ENCODE measurements at regions of chr1 and their contacts with region 1.

Region 1: GRCh38 chr1:211680752-211681327 is 5.4 kb upstream of the NEK2 start:
- DNase-seq: peak; percentile 80
- ATAC-seq: peak; percentile 84
- H3K4me3 ChIP-seq: no peak overlapping the region
- H3K27ac ChIP-seq: peak overlapping the region; percentile 38
- H3K4me1 ChIP-seq: peaks cover 16% of the 10 kb centered on the region
- H3K27me3 ChIP-seq: no peaks in the 10 kb centered on the region
- CTCF ChIP-seq: peak; percentile 66 to 87 (median 81); a peak in 5 of 6 replicates
- EP300 ChIP-seq: 0 out of 4 replicates have a peak, but pooled peaks of 1 of the 2 experiments have one; percentile 20
- POLR2A ChIP-seq: no peak
- RAD21 ChIP-seq: peak; percentile 88

Region 2: DNA sequence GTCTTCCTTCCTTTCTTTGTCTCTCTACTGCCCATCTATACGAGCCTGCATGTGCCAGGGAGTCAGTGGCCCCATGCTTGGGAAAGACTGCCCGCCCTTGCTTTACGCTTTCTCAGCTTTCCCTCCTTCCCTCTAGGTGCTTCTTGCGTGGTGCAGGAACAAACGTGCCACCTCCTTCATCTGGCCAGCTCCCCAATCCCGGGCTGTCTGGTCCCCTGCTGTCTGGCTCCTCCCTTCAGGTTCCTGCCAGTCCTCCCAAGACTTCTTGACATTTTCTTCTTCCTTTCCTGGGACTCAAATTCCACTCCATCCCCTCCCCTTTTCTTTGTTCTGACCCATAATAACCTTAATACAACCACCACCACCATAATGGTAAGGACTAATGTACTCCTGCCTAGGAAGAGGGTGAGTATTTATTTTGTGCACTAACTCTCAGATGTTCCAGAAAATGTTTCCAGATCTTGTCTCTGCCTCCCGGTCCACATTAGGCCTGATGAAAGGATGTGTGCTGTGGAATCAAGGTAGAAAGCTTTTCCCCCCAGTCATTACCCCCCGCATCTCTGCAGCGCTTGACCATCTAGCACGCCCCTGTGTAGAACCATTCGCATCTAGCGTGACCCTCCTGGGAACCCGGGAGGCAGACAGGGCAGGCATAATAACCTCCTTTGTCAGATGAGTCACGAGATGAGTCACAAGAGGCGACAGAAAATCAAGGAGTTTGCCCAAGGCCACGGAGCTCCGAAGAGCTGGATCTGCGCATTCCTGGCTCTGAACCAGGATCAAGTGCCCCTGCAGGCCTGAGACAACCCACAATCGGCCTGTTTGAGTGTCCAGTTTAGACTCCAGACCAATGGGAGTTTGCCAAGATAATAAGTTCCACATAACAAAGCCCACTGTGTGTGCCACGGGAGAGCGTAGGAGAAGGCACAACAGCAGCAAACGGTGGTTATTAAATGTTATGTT is 54.6 kb after region 1 on chr1:
- CTCF ChIA-PET with region 1: interaction called, 5 read pairs
- POLR2A ChIA-PET with region 1: no interaction called
- RAD21 ChIA-PET with region 1: interaction called, 14 read pairs
- SMC1A ChIA-PET with region 1: interaction called, 11 read pairs
- in situ Hi-C with region 1: no loop called
- intact Hi-C with region 1: no loop called
- DNase-seq: no peak
- ATAC-seq: no peak
- H3K4me3 ChIP-seq: no peak overlapping the region
- H3K27ac ChIP-seq: no peak overlapping the region
- H3K4me1 ChIP-seq: peaks cover 30% of the 10 kb centered on the region
- H3K27me3 ChIP-seq: no peaks in the 10 kb centered on the region
- CTCF ChIP-seq: no peak
- EP300 ChIP-seq: no peak
- POLR2A ChIP-seq: no peak
- RAD21 ChIP-seq: no peak

Region 3: GRCh38 chr1:211935448-211935970 is 254.7 kb after region 1 on chr1:
- CTCF ChIA-PET with region 1: interaction called, 7 read pairs
- POLR2A ChIA-PET with region 1: interaction called, 4 read pairs
- RAD21 ChIA-PET with region 1: interaction called, 13 read pairs
- SMC1A ChIA-PET with region 1: interaction called, 6 read pairs
- in situ Hi-C with region 1: no loop called
- intact Hi-C with region 1: loop called (anchors 5 kb)
- DNase-seq: peak; percentile 97
- ATAC-seq: peak; percentile 84
- H3K4me3 ChIP-seq: peak overlapping the region; percentile 24; the same call in 1 of the 2 replicates
- H3K27ac ChIP-seq: peak overlapping the region; percentile 68
- H3K4me1 ChIP-seq: peaks cover 62% of the 10 kb centered on the region
- H3K27me3 ChIP-seq: no peaks in the 10 kb centered on the region
- CTCF ChIP-seq: no peak
- EP300 ChIP-seq: peak; percentile 87 to 94
- POLR2A ChIP-seq: no peak
- RAD21 ChIP-seq: 0 out of 2 replicates have a peak, but pooled peaks have one; percentile 4

Region 4: DNA sequence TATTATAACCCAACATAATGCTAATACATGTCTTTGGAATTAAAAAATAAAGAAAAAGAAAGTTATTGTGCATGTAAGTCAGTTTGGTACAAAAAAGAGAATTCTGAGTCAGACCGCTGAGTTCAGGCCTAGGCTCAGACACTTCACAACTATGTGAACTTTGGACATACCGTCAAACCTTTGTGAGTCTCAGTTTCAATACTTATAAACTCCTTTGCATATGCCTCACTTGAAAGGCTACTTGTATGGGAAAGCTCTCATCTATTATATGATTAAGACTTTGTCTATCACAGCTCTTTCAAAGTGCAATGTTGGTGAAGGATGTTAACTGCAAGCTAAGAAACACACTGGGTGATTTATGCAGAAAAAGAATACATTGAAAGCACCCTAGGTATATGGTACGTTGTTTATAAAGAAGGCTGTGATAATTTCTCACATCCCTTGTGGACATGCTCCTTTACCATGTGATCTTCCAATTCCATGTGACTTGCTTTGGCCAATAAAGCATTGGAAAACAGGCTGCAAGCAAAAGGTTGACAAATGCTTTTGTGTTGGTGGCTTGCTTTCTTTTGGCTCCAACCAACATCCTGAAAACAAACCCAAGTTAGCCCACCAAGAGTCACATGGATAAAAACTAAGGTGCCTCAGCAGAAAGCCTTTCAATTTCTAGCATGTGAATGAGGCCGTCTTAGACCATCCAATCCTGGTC is 304.9 kb after region 1 on chr1:
- CTCF ChIA-PET with region 1: interaction called, 11 read pairs
- POLR2A ChIA-PET with region 1: interaction called, 3 read pairs
- RAD21 ChIA-PET with region 1: interaction called, 9 read pairs
- SMC1A ChIA-PET with region 1: interaction called, 10 read pairs
- in situ Hi-C with region 1: no loop called
- intact Hi-C with region 1: no loop called
- DNase-seq: peak; percentile 82
- ATAC-seq: peak; percentile 99
- H3K4me3 ChIP-seq: no peak overlapping the region
- H3K27ac ChIP-seq: peak overlapping the region; percentile 88
- H3K4me1 ChIP-seq: peaks cover 16% of the 10 kb centered on the region
- H3K27me3 ChIP-seq: no peaks in the 10 kb centered on the region
- CTCF ChIP-seq: no peak
- EP300 ChIP-seq: peak in 1 of 2 experiments; percentile 52; a peak in 1 of 4 replicates
- POLR2A ChIP-seq: no peak; the same call in 1 of the 2 replicates
- RAD21 ChIP-seq: no peak

Region 5: DNA sequence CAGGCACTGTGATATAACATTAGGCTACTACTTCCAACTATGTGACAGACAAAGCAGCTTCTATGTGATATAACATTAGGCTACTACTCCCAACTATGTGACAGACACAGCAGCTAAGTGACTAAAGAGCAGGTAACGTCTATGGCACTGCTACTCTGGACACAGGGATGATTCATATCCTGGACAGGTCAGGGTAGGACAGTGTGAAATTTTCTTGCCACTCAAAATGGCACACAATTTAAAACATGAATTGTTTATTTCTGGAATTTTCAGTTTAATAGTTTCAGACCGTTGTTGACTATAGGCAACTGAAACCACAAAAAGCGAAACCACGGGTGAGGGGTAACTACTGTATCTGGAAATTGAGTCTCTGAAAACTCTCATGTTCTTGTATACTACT is 359.8 kb after region 1 on chr1:
- CTCF ChIA-PET with region 1: interaction called, 181 read pairs
- POLR2A ChIA-PET with region 1: interaction called, 26 read pairs
- RAD21 ChIA-PET with region 1: interaction called, 107 read pairs
- SMC1A ChIA-PET with region 1: interaction called, 135 read pairs
- in situ Hi-C with region 1: no loop called
- intact Hi-C with region 1: loop called (anchors 1 kb)
- DNase-seq: no peak
- ATAC-seq: peak; percentile 46
- H3K4me3 ChIP-seq: peak overlapping the region; percentile 51
- H3K27ac ChIP-seq: peak overlapping the region; percentile 55; the same call in 1 of the 2 replicates
- H3K4me1 ChIP-seq: peaks cover 3% of the 10 kb centered on the region; the same call in 1 of the 2 replicates
- H3K27me3 ChIP-seq: no peaks in the 10 kb centered on the region
- CTCF ChIP-seq: no peak
- EP300 ChIP-seq: no peak
- POLR2A ChIP-seq: no peak
- RAD21 ChIP-seq: no peak

Region 6: DNA sequence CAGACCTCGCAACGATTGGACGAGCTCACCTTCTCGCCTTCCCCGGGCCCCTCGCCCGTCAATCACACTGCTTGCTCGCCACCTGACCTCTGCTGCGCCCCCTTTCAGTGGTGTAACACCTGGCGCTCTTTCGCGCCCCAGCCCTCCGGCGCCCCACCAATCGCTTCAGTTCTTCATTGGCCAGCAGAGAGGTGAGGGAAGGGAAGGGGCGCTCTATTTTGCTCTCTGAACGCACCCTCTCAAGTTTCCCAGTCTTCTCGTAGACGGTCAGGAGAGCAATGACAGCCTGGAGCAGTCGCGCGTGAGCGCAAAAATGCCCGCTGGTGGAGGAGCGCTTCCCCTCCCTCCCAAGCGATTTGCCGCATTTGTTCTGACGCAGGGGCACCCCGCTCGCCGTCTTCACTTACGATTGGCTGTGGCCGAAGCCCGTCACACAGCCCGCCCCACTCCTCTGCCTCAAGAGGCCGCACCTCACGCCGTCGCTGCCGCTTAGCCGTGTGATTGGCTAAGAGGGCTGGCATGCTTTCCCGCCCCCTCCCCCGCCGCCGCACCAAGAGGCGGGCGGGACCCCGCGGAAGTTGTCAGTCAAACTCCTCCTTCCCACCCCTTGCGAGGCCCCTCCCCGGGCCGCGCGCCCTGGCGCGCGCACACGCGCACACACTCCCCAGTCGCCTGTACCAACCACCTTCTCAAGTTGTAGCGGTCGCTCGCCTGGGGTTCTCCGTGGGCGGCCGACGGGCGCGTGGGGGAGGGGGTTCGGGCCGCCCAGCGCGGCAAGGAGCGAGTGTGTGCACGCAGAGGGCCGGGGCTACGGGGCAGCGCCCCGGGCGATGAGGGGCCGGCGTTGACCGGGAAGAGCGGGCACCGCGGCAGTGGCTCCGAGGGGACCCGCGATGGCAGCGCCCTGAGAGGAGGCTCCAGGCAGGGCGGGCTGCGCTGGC is 604.2 kb after region 1 on chr1 and contains the start of gene PPP2R5A:
- CTCF ChIA-PET with region 1: interaction called, 9 read pairs
- POLR2A ChIA-PET with region 1: no interaction called
- RAD21 ChIA-PET with region 1: interaction called, 15 read pairs
- SMC1A ChIA-PET with region 1: interaction called, 8 read pairs
- in situ Hi-C with region 1: no loop called
- intact Hi-C with region 1: loop called (anchors 2 kb)
- DNase-seq: peak; percentile 97
- ATAC-seq: peak; percentile 94
- H3K4me3 ChIP-seq: peak within 1 kb of the TSS; percentile 88
- H3K27ac ChIP-seq: peak within 1 kb of the TSS; percentile 79
- H3K4me1 ChIP-seq: peaks cover 7% of the 10 kb centered on the region
- H3K27me3 ChIP-seq: no peaks in the 10 kb centered on the region
- CTCF ChIP-seq: peak; percentile 9 to 40 (median 27); a peak in 5 of 6 replicates
- EP300 ChIP-seq: no peak
- POLR2A ChIP-seq: peak; percentile 77
- RAD21 ChIP-seq: no peak
- polyA plus RNA-seq, gene PPP2R5A: 15.4 to 18.2 TPM

Region 7: DNA sequence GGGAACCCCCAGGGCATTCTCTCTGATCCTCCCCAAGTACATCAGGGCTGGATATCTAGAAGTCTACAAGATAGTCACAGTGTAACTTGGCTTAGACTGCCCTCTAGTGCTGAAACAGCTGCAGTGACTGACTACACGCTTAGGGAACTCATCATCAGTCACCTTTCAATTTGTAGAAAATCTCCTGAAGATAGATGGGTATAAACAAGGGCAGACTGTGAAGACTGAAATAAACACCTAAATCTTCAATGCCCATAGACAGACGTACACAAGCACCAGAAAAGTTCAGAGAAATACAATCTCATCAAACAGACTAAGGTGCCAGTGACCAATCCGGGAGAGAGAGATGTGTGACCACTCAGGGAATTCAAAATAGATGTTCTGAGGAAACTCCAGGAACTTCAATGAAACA is 687.2 kb after region 1 on chr1:
- CTCF ChIA-PET with region 1: interaction called, 10 read pairs
- POLR2A ChIA-PET with region 1: no interaction called
- RAD21 ChIA-PET with region 1: interaction called, 12 read pairs
- SMC1A ChIA-PET with region 1: interaction called, 8 read pairs
- in situ Hi-C with region 1: loop called (anchors 10 kb)
- intact Hi-C with region 1: no loop called
- DNase-seq: peak; percentile 36
- ATAC-seq: peak; percentile 99
- H3K4me3 ChIP-seq: no peak overlapping the region
- H3K27ac ChIP-seq: no peak overlapping the region
- H3K4me1 ChIP-seq: no peaks in the 10 kb centered on the region
- H3K27me3 ChIP-seq: no peaks in the 10 kb centered on the region
- CTCF ChIP-seq: peak; percentile 77 to 90 (median 87)
- EP300 ChIP-seq: no peak
- POLR2A ChIP-seq: no peak
- RAD21 ChIP-seq: peak; percentile 90

Measured in GM12878 (cell line).